GM13977 (cell line): ENCODE measurements at regions of chr12 and their contacts with region 1.

Region 1: DNA sequence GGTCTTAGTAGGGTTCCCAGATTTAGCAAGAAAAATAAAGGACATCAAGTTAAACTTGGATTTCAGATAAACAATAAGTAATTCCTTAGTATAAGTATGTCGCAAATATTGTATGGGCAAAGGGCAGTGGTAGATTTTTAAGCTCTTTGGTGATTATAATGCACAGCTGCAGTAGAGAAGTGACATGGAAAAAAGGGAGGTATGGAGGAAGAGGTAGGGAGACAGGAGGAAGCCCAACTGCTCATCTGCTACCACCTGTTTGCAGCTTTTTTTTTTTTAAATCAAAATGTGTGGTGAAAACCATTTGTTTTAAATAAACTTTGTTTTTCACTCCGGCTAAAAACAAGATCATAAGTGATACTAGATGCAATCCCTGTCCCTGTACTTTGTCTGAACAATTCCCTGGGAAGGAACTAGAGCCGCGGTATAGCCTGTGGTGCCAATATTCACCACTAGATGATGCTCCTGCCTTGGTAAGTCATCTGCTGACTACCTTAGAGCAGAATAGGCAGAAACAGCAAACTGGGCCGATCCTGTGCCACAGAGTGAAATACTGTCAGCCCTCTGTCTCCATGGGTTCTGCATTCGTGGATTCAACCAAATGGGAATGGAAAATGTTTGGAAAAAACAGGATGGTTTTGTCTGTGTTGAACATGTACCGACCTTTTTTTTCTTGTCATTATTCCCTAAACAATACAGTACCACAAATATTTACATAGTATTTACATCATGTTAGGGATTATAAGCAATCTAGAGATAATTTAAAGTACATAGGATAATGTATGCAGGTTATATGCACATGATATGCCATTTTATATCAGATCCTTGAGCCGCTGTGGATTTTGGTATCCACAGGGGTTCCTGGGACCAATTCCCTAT is 62.4 kb upstream of the PLBD1 start:
- DNase-seq: peak; percentile 52
- CTCF ChIP-seq: peak; percentile 97

Region 2: GRCh38 chr12:14514154-14514842 is 115.8 kb before region 1 on chr12:
- in situ Hi-C with region 1: loop called (anchors 10 kb)
- DNase-seq: peak; percentile 37
- CTCF ChIP-seq: peak; percentile 54

Region 3: DNA sequence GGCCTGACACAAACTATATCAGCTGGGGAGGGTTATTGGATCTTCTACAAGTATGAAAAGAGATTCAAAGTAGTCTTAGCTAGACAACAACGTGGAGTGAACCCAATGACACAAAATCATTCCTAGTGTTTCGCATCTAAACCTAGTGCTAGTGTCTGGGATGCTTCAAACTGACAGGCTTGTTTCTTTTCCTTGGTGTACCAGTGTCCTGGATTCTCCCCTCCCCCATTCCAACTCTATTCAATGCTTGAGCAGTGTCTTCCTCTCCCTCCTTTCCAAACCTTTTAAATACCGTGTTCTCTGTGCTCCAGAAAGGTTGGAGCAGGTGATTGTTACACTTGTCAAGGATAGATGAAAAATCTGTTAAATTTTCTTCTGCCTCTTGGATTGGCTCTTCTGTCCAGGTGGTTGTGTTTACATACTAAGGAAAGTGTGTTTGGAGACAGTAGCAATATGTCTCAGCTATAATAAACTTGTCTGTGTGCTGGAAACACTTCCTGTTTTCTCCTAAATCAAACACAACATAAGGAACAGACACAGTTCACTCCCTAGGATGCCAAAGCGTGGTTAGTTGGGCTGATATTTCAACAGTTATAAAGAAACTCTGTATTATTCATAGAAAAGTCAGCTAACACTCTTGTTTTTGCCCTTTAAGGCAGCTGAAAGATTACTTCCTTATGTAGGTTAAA is 80.7 kb after region 1 on chr12:
- in situ Hi-C with region 1: no loop called
- DNase-seq: no peak
- CTCF ChIP-seq: no peak

Region 4: GRCh38 chr12:15522565-15523187 is 892.6 kb after region 1 on chr12:
- in situ Hi-C with region 1: no loop called
- DNase-seq: peak; percentile 26
- CTCF ChIP-seq: peak; percentile 52